K562 (cell line): ENCODE measurements at regions of chr4 and their contacts with region 1.

Region 1: GRCh38 chr4:151045907-151046306 is 30.8 kb upstream of the LRBA start:
- DNase-seq: peak; percentile 26 to 58 (median 40)
- ATAC-seq: peak; percentile 93
- H3K4me3 ChIP-seq: no peak overlapping the region
- H3K27ac ChIP-seq: no peak overlapping the region
- H3K4me1 ChIP-seq: no peaks in the 10 kb centered on the region; a peak in 1 of 5 replicates
- H3K27me3 ChIP-seq: no peaks in the 10 kb centered on the region
- CTCF ChIP-seq: peak; percentile 49 to 66 (median 55); a peak in 4 of 6 replicates
- EP300 ChIP-seq: no peak
- POLR2A ChIP-seq: no peak
- RAD21 ChIP-seq: peak in 1 of 2 experiments; percentile 66; a peak in 3 of 4 replicates

Region 2: DNA sequence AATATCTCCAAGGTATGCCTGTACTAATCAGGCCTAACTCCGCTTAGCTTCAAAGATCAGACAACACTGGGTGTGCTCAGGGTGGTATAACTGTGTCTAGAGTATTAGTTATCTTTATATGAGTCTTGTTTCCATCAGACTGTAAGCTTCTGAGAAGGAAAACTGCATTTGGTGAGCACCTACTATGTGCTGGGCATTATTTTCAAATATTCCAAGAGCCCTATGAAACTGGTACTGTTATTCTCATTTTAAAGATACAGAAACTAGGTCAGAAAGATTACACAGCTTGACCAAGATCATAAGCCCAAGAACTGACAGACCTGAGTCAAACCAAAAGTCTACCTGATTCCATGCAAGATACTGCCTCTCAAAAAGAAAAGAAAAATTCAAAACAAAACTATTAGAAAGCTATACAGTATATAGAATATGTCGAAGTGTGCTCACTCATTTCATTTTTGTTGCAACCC is 75.2 kb before region 1 on chr4:
- CTCF ChIA-PET with region 1: interaction called, 6 read pairs
- POLR2A ChIA-PET with region 1: no interaction called
- in situ Hi-C with region 1: no loop called
- intact Hi-C with region 1: loop called (anchors 5 kb)
- DNase-seq: no peak
- ATAC-seq: no peak
- H3K4me3 ChIP-seq: no peak overlapping the region
- H3K27ac ChIP-seq: no peak overlapping the region
- H3K4me1 ChIP-seq: no peaks in the 10 kb centered on the region
- H3K27me3 ChIP-seq: no peaks in the 10 kb centered on the region
- CTCF ChIP-seq: no peak
- EP300 ChIP-seq: no peak
- POLR2A ChIP-seq: no peak
- RAD21 ChIP-seq: no peak